ENCODE measurements at regions of chr11 and their contacts with region 1.

Region 1: GRCh38 chr11:76734456-76735420 is 48.4 kb upstream of the TSKU start:
- DNase-seq: no peak
- ATAC-seq: no peak
- H3K4me3 ChIP-seq: peak overlapping the region in 1 of 3 experiments; percentile 9; a peak in 1 of 6 replicates
- H3K27ac ChIP-seq: no peak overlapping the region
- H3K4me1 ChIP-seq: peaks cover 22% of the 10 kb centered on the region
- H3K27me3 ChIP-seq: peaks cover 4 to 27% of the 10 kb centered on the region in 2 experiments; a peak in 2 of 5 replicates
- CTCF ChIP-seq: no peak
- EP300 ChIP-seq: no peak
- POLR2A ChIP-seq: no peak
- RAD21 ChIP-seq: no peak

Region 2: GRCh38 chr11:76799066-76799804 is 64.5 kb after region 1 on chr11:
- CTCF ChIA-PET with region 1: interaction called, 26 read pairs
- POLR2A ChIA-PET with region 1: interaction called, 5 read pairs
- in situ Hi-C with region 1: no loop called
- intact Hi-C with region 1: loop called (anchors 1 kb)
- DNase-seq: peak; percentile 81
- ATAC-seq: peak; percentile 88
- H3K4me3 ChIP-seq: no peak overlapping the region; a peak in 1 of 6 replicates
- H3K27ac ChIP-seq: no peak overlapping the region
- H3K4me1 ChIP-seq: peaks cover 63% of the 10 kb centered on the region
- H3K27me3 ChIP-seq: no peaks in the 10 kb centered on the region; a peak in 2 of 5 replicates
- CTCF ChIP-seq: peak; percentile 96
- EP300 ChIP-seq: peak in 1 of 2 experiments; percentile 44; a peak in 1 of 4 replicates
- POLR2A ChIP-seq: 0 out of 4 replicates have a peak, but pooled peaks of 1 of the 2 experiments have one; percentile 25
- RAD21 ChIP-seq: peak; percentile 99

Region 3: DNA sequence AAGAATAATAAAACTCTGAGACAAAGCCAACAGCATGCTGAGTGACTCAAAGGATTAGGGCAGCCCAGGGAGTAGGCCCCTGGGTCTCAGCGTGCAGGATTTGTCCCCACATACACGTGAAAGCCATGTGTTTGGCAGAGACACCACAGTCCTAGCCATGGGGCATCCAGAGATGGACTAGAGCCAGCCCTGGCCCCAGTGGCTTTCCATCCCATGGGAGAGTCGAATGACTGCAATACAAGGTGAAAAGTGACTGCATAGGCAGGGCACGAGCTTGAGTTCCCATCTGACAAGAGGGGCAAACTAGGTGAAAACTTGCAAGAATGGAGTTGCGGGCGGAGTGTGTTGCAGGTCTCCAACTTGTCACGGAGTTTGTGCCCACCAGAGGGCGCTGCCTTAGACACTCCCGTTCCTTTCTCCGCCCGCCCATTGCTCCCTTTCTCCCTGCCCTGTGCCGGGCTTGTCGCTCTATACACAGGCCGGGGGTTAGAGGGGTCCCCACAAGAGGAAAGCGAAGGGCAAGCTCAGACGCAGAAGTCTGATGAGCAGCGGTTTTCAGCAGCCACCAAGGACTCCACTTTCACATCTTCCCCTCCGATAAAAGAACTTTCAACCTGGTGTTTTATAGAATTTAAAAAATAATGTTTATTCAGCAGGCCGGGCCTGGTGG is 72.6 kb after region 1 on chr11:
- CTCF ChIA-PET with region 1: interaction called, 6 read pairs
- POLR2A ChIA-PET with region 1: no interaction called
- in situ Hi-C with region 1: no loop called
- intact Hi-C with region 1: loop called (anchors 2 kb)
- DNase-seq: peak; percentile 68
- ATAC-seq: peak; percentile 93
- H3K4me3 ChIP-seq: peak overlapping the region in 1 of 3 experiments; percentile 20; a peak in 1 of 6 replicates
- H3K27ac ChIP-seq: no peak overlapping the region
- H3K4me1 ChIP-seq: peaks cover 22% of the 10 kb centered on the region
- H3K27me3 ChIP-seq: peaks cover 6 to 19% of the 10 kb centered on the region in 2 experiments; a peak in 4 of 5 replicates
- CTCF ChIP-seq: peak; percentile 92
- EP300 ChIP-seq: no peak
- POLR2A ChIP-seq: no peak
- RAD21 ChIP-seq: peak; percentile 67

Region 4: GRCh38 chr11:76835928-76836612 is 101.3 kb after region 1 on chr11:
- CTCF ChIA-PET with region 1: interaction called, 9 read pairs
- POLR2A ChIA-PET with region 1: no interaction called
- in situ Hi-C with region 1: loop called (anchors 10 kb)
- intact Hi-C with region 1: loop called (anchors 1 kb)
- DNase-seq: no peak
- ATAC-seq: no peak
- H3K4me3 ChIP-seq: no peak overlapping the region
- H3K27ac ChIP-seq: no peak overlapping the region
- H3K4me1 ChIP-seq: peaks cover 7% of the 10 kb centered on the region; the same call in 1 of the 2 replicates
- H3K27me3 ChIP-seq: peaks cover 3 to 46% of the 10 kb centered on the region in 2 experiments; a peak in 3 of 5 replicates
- CTCF ChIP-seq: no peak
- EP300 ChIP-seq: no peak
- POLR2A ChIP-seq: no peak
- RAD21 ChIP-seq: no peak

Region 5: DNA sequence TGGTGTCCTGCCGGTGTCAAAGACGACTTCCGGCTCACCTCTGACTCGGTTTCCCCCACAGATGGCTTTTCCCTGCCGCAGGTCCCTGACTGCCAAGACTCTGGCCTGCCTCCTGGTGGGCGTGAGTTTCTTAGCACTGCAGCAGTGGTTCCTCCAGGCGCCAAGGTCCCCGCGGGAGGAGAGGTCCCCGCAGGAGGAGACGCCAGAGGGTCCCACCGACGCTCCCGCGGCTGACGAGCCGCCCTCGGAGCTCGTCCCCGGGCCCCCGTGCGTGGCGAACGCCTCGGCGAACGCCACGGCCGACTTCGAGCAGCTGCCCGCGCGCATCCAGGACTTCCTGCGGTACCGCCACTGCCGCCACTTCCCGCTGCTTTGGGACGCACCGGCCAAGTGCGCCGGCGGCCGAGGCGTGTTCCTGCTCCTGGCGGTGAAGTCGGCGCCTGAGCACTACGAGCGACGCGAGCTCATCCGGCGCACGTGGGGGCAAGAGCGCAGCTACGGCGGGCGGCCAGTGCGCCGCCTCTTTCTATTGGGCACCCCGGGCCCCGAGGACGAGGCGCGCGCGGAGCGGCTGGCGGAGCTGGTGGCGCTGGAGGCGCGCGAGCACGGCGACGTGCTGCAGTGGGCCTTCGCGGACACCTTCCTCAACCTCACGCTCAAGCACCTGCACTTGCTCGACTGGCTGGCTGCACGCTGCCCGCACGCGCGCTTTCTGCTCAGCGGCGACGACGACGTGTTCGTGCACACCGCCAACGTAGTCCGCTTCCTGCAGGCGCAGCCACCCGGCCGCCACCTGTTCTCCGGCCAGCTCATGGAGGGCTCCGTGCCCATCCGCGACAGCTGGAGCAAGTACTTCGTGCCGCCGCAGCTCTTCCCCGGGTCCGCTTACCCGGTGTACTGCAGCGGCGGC is 305.0 kb after region 1 on chr11:
- CTCF ChIA-PET with region 1: no interaction called
- POLR2A ChIA-PET with region 1: no interaction called
- in situ Hi-C with region 1: loop called (anchors 5 kb)
- intact Hi-C with region 1: loop called (anchors 10 kb)
- DNase-seq: no peak
- ATAC-seq: no peak
- H3K4me3 ChIP-seq: no peak overlapping the region
- H3K27ac ChIP-seq: no peak overlapping the region
- H3K4me1 ChIP-seq: peaks cover 37% of the 10 kb centered on the region
- H3K27me3 ChIP-seq: peaks cover 7 to 70% of the 10 kb centered on the region in 2 experiments
- CTCF ChIP-seq: peak; percentile 63
- EP300 ChIP-seq: no peak
- POLR2A ChIP-seq: no peak
- RAD21 ChIP-seq: 0 out of 2 replicates have a peak, but pooled peaks have one; percentile 38

Measured in HepG2 (cell line).